ENCODE measurements at regions of chr4 and their contacts with region 1.

Region 1: DNA sequence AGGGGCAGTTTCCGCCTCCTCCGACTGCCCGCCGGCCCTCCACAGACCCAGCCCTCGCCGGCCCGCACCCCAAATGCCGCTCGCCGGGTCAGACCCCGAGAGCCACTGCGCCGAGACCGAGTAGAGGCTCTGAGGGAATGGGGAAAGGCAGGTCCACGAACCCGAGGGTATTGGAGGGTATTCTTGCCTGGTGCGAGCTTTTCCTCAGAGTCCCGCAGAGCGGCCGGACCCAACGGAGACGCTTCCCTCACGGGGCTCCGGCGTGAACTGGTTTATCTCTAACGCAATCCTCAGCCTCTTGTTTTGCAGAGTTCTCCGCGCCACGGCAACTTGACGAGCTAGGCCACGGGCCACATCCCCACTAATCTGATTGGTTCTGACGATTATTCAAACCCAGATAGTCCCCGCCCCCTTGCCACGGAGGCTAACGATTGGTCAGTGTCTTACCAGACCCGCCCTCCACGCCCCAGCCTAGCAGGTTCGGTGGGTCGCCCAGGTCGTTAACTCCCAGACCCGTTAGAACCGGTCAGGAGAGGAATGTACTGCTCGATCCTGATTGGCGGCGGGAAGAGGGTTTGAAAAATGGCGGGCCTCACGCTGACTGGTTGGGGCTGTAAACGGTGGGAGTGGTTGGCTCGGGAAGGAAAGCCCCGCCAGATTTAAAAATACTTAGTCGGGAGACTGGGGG is at the start of gene HMGB2:
- DNase-seq: peak; percentile 100
- H3K4me3 ChIP-seq: peak within 1 kb of the TSS; percentile 90 to 100
- H3K27ac ChIP-seq: peak within 1 kb of the TSS; percentile 99 to 100
- H3K4me1 ChIP-seq: peaks cover 5 to 14% of the 10 kb centered on the region in 2 donors
- H3K27me3 ChIP-seq: no peaks in the 10 kb centered on the region
- CTCF ChIP-seq: no peak
- POLR2A ChIP-seq: peak; percentile 95 to 98
- total RNA-seq, gene HMGB2: 19.4 to 194 (median 74.3) TPM

Region 2: GRCh38 chr4:173367285-173367684 is 33.1 kb after region 1 on chr4:
- intact Hi-C with region 1: loop called (anchors 5 kb)
- DNase-seq: no peak
- H3K4me3 ChIP-seq: no peak overlapping the region
- H3K27ac ChIP-seq: peak overlapping the region; percentile 18 to 32
- H3K4me1 ChIP-seq: peaks cover 0 to 9% of the 10 kb centered on the region in 2 donors
- H3K27me3 ChIP-seq: no peaks in the 10 kb centered on the region
- CTCF ChIP-seq: no peak
- POLR2A ChIP-seq: no peak

Region 3: GRCh38 chr4:173415885-173416653 is 81.8 kb after region 1 on chr4:
- intact Hi-C with region 1: no loop called
- DNase-seq: peak; percentile 31 to 39
- H3K4me3 ChIP-seq: no peak overlapping the region
- H3K27ac ChIP-seq: peak overlapping the region; percentile 18 to 30
- H3K4me1 ChIP-seq: no peaks in the 10 kb centered on the region
- H3K27me3 ChIP-seq: no peaks in the 10 kb centered on the region
- CTCF ChIP-seq: no peak
- POLR2A ChIP-seq: no peak

Measured in uterus (tissue), 4 donors.